ENCODE measurements at regions of chr15 and their contacts with region 1.

Region 1: GRCh38 chr15:59657635-59658148 is 377 bp upstream of the GTF2A2 start:
- DNase-seq: no peak
- ATAC-seq: peak; percentile 42

Region 2: GRCh38 chr15:59685737-59686297 is 28.1 kb after region 1 on chr15:
- intact Hi-C with region 1: loop called (anchors 2 kb)
- DNase-seq: no peak
- ATAC-seq: no peak